ENCODE measurements at regions of chr14 and their contacts with region 1.

Region 1: GRCh38 chr14:39102969-39103957 is at the start of gene SEC23A:
- DNase-seq: peak; percentile 87
- ATAC-seq: peak; percentile 98
- H3K4me3 ChIP-seq: peak within 1 kb of the TSS; percentile 80 to 98 (median 88)
- H3K4me3 Mint-ChIP-seq: peak within 1 kb of the TSS; percentile 97
- H3K27ac ChIP-seq: peak within 1 kb of the TSS; percentile 83 to 93
- H3K27ac Mint-ChIP-seq: peak within 1 kb of the TSS; percentile 99
- H3K4me1 ChIP-seq: peaks cover 12 to 19% of the 10 kb centered on the region in 2 donors
- H3K4me1 Mint-ChIP-seq: peaks cover 32% of the 10 kb centered on the region
- H3K27me3 ChIP-seq: no peaks in the 10 kb centered on the region
- H3K27me3 Mint-ChIP-seq: no peaks in the 10 kb centered on the region
- CTCF ChIP-seq: no peak
- total RNA-seq, gene SEC23A: 52.3 and 54.9 TPM in 2 replicates

Region 2: DNA sequence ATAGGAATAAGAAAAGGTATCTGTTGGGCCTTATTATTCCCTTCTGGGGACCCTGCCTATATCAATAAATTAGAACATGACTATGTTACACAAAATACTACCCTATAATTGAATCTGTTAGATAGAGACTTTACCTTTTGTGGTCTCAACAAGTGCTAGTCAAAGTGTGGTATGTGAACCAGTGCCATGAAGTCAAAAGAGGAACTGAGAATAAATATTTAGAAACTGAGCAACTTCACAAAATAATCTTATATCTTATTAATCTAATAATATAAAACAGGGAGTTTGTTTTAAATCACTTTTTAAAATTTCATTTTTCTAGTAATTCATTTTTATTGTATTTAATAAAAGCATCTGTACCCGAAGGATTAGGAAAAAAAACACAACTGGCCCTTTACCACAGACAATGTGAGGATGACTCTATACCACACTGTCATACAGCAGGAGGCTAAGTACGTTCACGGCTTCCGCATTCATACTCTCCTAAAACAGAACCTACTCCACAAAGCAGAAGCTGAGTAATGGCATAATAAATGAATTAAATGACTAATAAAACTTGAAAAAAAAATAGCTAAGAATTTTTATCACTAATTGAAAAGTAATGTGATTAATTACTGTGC is 42.3 kb before region 1 on chr14:
- CTCF ChIA-PET with region 1: no interaction called
- POLR2A ChIA-PET with region 1: no interaction called
- intact Hi-C with region 1: loop called (anchors 5 kb)
- DNase-seq: peak; percentile 66
- ATAC-seq: peak; percentile 96
- H3K4me3 ChIP-seq: no peak overlapping the region
- H3K4me3 Mint-ChIP-seq: peak overlapping the region; percentile 50
- H3K27ac ChIP-seq: peak overlapping the region; percentile 23 to 46
- H3K27ac Mint-ChIP-seq: peak overlapping the region; percentile 77
- H3K4me1 ChIP-seq: peaks cover 6 to 13% of the 10 kb centered on the region in 2 donors
- H3K4me1 Mint-ChIP-seq: peaks cover 20% of the 10 kb centered on the region
- H3K27me3 ChIP-seq: no peaks in the 10 kb centered on the region
- H3K27me3 Mint-ChIP-seq: no peaks in the 10 kb centered on the region
- CTCF ChIP-seq: no peak

Region 3: GRCh38 chr14:39174560-39175444 is 71.5 kb after region 1 on chr14 and contains the start of gene PNN:
- CTCF ChIA-PET with region 1: no interaction called
- POLR2A ChIA-PET with region 1: interaction called, 7 read pairs
- intact Hi-C with region 1: loop called (anchors 1 kb)
- DNase-seq: peak; percentile 99
- ATAC-seq: peak; percentile 82
- H3K4me3 ChIP-seq: peak within 1 kb of the TSS; percentile 80 to 97 (median 85)
- H3K4me3 Mint-ChIP-seq: peak within 1 kb of the TSS; percentile 97
- H3K27ac ChIP-seq: peak within 1 kb of the TSS; percentile 92 to 95
- H3K27ac Mint-ChIP-seq: peak within 1 kb of the TSS; percentile 99
- H3K4me1 ChIP-seq: peaks cover 15 to 24% of the 10 kb centered on the region in 2 donors
- H3K4me1 Mint-ChIP-seq: peaks cover 35% of the 10 kb centered on the region
- H3K27me3 ChIP-seq: no peaks in the 10 kb centered on the region
- H3K27me3 Mint-ChIP-seq: no peaks in the 10 kb centered on the region
- CTCF ChIP-seq: no peak
- total RNA-seq, gene PNN: 131 and 134 TPM in 2 replicates

Region 4: DNA sequence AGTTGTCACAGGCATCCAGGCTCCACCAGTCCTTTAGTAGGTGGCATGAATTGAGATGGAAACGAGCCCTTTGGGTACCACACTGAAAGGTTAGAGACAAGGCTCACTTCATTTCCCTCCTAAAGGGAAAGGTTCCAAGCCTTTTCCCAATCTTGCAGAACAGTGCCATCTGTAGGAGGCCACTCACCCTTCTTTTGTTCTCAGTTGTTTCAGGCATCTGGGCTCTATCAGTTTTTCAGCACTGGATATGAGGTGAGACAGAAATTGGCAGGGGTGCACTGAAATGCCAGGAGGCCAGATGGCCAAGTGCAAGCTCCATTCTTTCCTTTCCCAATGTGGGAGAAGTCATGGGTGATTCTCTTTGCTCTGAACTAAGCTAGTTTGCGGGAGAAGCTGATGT is 313.8 kb after region 1 on chr14:
- CTCF ChIA-PET with region 1: interaction called, 4 read pairs
- POLR2A ChIA-PET with region 1: interaction called, 14 read pairs
- intact Hi-C with region 1: no loop called
- DNase-seq: no peak
- ATAC-seq: no peak
- H3K4me3 ChIP-seq: no peak overlapping the region
- H3K4me3 Mint-ChIP-seq: no peak overlapping the region
- H3K27ac ChIP-seq: no peak overlapping the region
- H3K27ac Mint-ChIP-seq: no peak overlapping the region
- H3K4me1 ChIP-seq: no peaks in the 10 kb centered on the region
- H3K4me1 Mint-ChIP-seq: peaks cover 15% of the 10 kb centered on the region
- H3K27me3 ChIP-seq: no peaks in the 10 kb centered on the region
- H3K27me3 Mint-ChIP-seq: no peaks in the 10 kb centered on the region
- CTCF ChIP-seq: no peak

Region 5: DNA sequence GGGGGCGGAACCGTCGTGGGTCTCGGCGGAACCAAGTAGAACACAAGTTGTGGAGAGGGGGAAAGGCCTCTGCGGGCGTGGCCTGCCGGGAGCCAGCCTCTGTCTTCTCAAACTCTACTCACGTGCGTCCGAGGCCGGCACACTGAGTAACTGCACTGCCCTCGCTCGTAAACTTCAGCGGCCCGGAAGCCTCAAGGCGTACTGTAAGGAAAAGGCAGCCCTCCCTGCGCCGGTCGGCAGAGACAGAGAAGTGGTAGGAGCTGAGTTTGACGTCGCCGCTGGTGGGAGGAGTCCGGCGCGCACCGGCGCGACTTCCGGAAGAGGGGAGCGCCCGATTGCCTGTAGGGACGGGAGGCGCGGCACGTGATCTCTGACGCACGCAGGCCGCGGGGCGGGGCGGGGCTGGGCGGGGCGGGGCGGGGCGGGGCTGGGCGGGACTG is 328.9 kb after region 1 on chr14 and contains the start of gene FBXO33:
- CTCF ChIA-PET with region 1: no interaction called
- POLR2A ChIA-PET with region 1: interaction called, 7 read pairs
- intact Hi-C with region 1: loop called (anchors 1 kb)
- DNase-seq: peak; percentile 99
- ATAC-seq: peak; percentile 75
- H3K4me3 ChIP-seq: peak within 1 kb of the TSS; percentile 85 to 95 (median 92)
- H3K4me3 Mint-ChIP-seq: peak within 1 kb of the TSS; percentile 99
- H3K27ac ChIP-seq: peak within 1 kb of the TSS; percentile 100
- H3K27ac Mint-ChIP-seq: peak within 1 kb of the TSS; percentile 100
- H3K4me1 ChIP-seq: peaks cover 24 to 30% of the 10 kb centered on the region in 2 donors
- H3K4me1 Mint-ChIP-seq: peaks cover 39% of the 10 kb centered on the region
- H3K27me3 ChIP-seq: no peaks in the 10 kb centered on the region
- H3K27me3 Mint-ChIP-seq: no peaks in the 10 kb centered on the region
- CTCF ChIP-seq: no peak
- total RNA-seq, gene FBXO33: 17.3 and 18.1 TPM in 2 replicates

Measured in B cell (primary cell).